ENCODE measurements at regions of chr11 and their contacts with region 1.

Region 1: GRCh38 chr11:129143335-129143734 is 48.8 kb downstream of the ARHGAP32 start:
- DNase-seq: peak; percentile 99
- ATAC-seq: peak; percentile 99
- H3K4me3 ChIP-seq: peak overlapping the region; percentile 52
- H3K27ac ChIP-seq: peak overlapping the region; percentile 93
- H3K4me1 ChIP-seq: peaks cover 57% of the 10 kb centered on the region
- H3K27me3 ChIP-seq: no peaks in the 10 kb centered on the region
- CTCF ChIP-seq: no peak

Region 2: DNA sequence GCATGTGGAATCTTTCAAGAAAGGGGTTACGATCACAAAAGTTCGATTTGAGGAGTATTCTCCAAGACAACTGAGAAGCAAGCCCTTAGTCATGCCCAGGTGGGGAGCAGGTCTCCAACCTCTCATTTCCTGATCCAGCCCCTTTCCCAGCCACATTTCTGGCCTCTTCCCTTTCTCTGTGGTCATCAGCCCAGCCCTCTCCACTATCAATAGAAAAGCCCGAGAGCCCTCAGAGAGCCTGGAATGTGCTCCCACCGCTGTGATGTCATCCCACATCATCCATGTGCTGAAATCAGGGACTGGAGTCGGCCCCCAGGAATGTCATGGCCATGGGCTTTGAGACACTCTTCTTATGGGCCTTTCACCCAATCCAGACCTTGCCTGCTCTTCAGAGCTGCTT is 338.9 kb before region 1 on chr11:
- CTCF ChIA-PET with region 1: no interaction called
- POLR2A ChIA-PET with region 1: no interaction called
- intact Hi-C with region 1: no loop called
- DNase-seq: no peak
- ATAC-seq: no peak
- H3K4me3 ChIP-seq: no peak overlapping the region
- H3K27ac ChIP-seq: no peak overlapping the region
- H3K4me1 ChIP-seq: no peaks in the 10 kb centered on the region
- H3K27me3 ChIP-seq: 0 out of 2 replicates have a peak, but pooled peaks cover 6% of the 10 kb centered on the region
- CTCF ChIP-seq: no peak

Region 3: GRCh38 chr11:129167315-129167714 is 24.0 kb after region 1 on chr11:
- CTCF ChIA-PET with region 1: no interaction called
- POLR2A ChIA-PET with region 1: no interaction called
- intact Hi-C with region 1: loop called (anchors 1 kb)
- DNase-seq: peak; percentile 65
- ATAC-seq: peak; percentile 90
- H3K4me3 ChIP-seq: no peak overlapping the region
- H3K27ac ChIP-seq: peak overlapping the region; percentile 38
- H3K4me1 ChIP-seq: peaks cover 18% of the 10 kb centered on the region
- H3K27me3 ChIP-seq: no peaks in the 10 kb centered on the region
- CTCF ChIP-seq: no peak

Region 4: GRCh38 chr11:129192156-129192555 is 48.8 kb after region 1 on chr11 and contains the start of gene ARHGAP32:
- CTCF ChIA-PET with region 1: no interaction called
- POLR2A ChIA-PET with region 1: no interaction called
- intact Hi-C with region 1: loop called (anchors 1 kb)
- DNase-seq: peak; percentile 33
- ATAC-seq: peak; percentile 57
- H3K4me3 ChIP-seq: peak within 1 kb of the TSS; percentile 16; the same call in 1 of the 2 replicates
- H3K27ac ChIP-seq: peak within 1 kb of the TSS; percentile 26
- H3K4me1 ChIP-seq: peaks cover 28% of the 10 kb centered on the region
- H3K27me3 ChIP-seq: no peaks in the 10 kb centered on the region
- CTCF ChIP-seq: no peak
- total RNA-seq, gene ARHGAP32: 12.0 and 13.7 TPM in 2 replicates

Region 5: DNA sequence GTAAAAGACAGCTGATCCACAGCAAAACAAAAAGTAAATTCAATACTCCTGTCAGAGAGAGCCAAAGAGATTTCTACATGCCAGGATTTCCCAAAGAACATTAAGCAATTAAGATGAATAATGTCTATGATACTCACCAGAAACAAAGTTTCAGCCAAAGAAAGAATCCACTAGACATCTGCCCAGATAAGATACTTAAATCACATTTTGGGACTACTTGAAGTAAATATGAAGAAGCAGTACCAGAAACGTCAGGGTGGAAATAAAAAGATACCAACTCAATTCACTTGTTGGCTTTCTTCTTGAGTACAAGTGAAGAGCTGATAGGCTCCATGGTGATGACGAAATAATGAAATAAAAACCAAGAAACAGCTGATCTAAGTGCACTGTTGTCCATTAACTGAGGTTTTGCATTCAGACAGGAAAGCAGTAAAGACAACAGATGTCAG is 80.4 kb after region 1 on chr11:
- CTCF ChIA-PET with region 1: no interaction called
- POLR2A ChIA-PET with region 1: no interaction called
- intact Hi-C with region 1: loop called (anchors 1 kb)
- DNase-seq: no peak
- ATAC-seq: no peak
- H3K4me3 ChIP-seq: no peak overlapping the region
- H3K27ac ChIP-seq: no peak overlapping the region; the same call in 1 of the 2 replicates
- H3K4me1 ChIP-seq: peaks cover 21% of the 10 kb centered on the region
- H3K27me3 ChIP-seq: no peaks in the 10 kb centered on the region
- CTCF ChIP-seq: no peak

Region 6: DNA sequence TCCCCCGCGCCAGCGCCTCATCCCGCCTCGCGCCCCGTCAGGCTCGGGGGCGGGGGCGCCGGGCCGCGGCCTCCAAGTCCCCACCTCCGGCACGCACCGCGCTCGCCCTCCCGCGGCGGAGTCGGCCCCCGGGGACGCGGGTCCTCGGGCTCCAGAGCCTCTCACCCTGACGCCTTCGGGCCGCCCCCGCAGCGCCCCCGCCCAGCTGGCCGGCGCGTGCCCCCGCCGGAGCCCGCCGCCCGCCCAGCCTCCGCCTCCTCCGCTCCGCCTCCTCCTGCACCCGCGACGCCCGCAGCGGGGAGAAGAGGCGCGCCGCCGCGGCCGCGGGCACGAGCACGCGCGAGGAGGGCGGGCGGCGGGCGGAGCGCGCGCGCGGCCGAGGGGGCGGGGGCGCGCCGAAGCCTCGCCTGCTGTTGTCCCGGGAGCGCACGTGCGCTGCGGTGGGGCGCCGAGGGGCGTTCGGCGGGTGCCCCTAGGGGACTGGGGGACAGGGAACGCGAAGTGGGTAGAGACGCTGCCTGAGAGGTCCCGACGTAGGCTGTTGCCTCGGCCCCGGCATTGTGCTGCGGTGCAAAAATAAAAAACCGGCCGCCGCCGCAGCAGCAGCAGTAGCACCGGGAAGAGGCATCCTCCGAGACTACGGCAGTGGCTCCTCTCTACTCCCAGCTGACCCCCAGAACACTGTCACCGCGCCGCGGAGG is 136.1 kb after region 1 on chr11:
- CTCF ChIA-PET with region 1: no interaction called
- POLR2A ChIA-PET with region 1: no interaction called
- intact Hi-C with region 1: loop called (anchors 2 kb)
- DNase-seq: peak; percentile 86
- ATAC-seq: peak; percentile 64
- H3K4me3 ChIP-seq: peak overlapping the region; percentile 83
- H3K27ac ChIP-seq: peak overlapping the region; percentile 84
- H3K4me1 ChIP-seq: peaks cover 55% of the 10 kb centered on the region
- H3K27me3 ChIP-seq: no peaks in the 10 kb centered on the region
- CTCF ChIP-seq: no peak